ENCODE measurements at regions of chr3 and their contacts with region 1.

Region 1: DNA sequence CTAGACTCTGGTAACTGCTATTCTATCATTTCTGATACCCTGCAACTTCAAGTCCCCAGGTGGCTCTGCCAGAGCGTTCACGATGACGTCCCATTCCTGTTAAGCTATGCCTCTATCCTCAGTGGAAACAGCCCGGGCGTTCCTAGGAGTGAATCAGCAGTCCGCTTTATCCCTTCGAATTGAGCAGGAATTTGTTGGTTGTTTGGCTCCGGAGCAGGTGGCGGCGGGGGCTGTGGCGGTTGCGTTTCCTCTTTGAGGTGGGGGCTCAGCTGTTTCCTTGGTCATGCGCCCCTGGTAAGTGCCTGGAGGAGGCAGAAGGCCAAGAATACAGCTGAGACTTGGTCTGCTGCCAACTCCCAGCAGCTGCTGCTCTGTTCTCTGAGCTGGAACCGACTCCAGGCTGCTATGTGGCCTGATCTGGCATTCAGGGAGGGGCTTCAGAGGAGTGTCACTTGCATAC is 25.2 kb downstream of the ARPP21 start:
- ATAC-seq: peak; percentile 66 to 99 (median 98)
- H3K4me3 ChIP-seq: no peak overlapping the region
- H3K27ac ChIP-seq: no peak overlapping the region
- H3K4me1 ChIP-seq: peaks cover 7% of the 10 kb centered on the region in 2 donors

Region 2: DNA sequence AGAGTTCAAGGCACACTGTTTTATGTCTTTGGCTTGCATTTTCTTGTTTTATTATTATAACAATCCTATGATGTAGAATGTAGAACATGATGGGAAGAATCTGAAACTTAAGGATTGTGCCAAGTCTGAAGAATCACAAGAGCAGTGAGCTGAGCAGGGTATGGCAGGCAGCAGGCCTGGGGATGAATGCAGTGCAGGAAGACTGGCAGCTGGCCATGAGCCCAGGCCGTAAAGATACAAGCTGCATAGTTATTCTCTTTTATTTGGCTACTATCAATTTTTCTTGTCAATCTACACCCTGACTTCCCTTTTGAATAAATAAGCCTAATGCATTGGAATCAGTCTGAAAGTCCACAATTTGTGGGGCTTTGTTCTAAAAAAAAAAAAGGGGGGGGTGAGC is 114.8 kb before region 1 on chr3:
- in situ Hi-C with region 1: no loop called
- ATAC-seq: peak in 1 of 8 experiments; percentile 72
- H3K4me3 ChIP-seq: no peak overlapping the region
- H3K27ac ChIP-seq: no peak overlapping the region
- H3K4me1 ChIP-seq: peaks cover 0 to 10% of the 10 kb centered on the region in 2 donors

Region 3: GRCh38 chr3:35908366-35909232 is 244.1 kb after region 1 on chr3:
- in situ Hi-C with region 1: loop called in 1 of 9 experiments (anchors 25 kb)
- ATAC-seq: peak; percentile 45 to 84 (median 63)
- H3K4me3 ChIP-seq: no peak overlapping the region
- H3K27ac ChIP-seq: no peak overlapping the region
- H3K4me1 ChIP-seq: no peaks in the 10 kb centered on the region